T-cell (primary cell): ENCODE measurements at regions of chr5 and their contacts with region 1.

Region 1: GRCh38 chr5:55037046-55037771 is 13.2 kb downstream of the GZMK start:
- DNase-seq: peak; percentile 21 to 76 (median 54)
- ATAC-seq: peak; percentile 92 to 99 (median 96)
- H3K4me3 ChIP-seq: no peak overlapping the region
- H3K4me3 Mint-ChIP-seq: peak overlapping the region in 1 of 3 donors; percentile 52
- H3K27ac ChIP-seq: peak overlapping the region; percentile 80
- H3K27ac Mint-ChIP-seq: peak overlapping the region; percentile 91 to 96
- H3K4me1 ChIP-seq: peaks cover 16 to 26% of the 10 kb centered on the region in 2 experiments
- H3K4me1 Mint-ChIP-seq: peaks cover 25 to 37% (median 36%) of the 10 kb centered on the region in 3 donors
- H3K27me3 ChIP-seq: no peaks in the 10 kb centered on the region
- H3K27me3 Mint-ChIP-seq: no peaks in the 10 kb centered on the region

Region 2: GRCh38 chr5:55021410-55021809 is 15.8 kb before region 1 on chr5:
- CTCF ChIA-PET with region 1: interaction called, 3 to 14 read pairs
- POLR2A ChIA-PET with region 1: interaction called, 3 to 4 read pairs
- DNase-seq: peak in 1 of 35 experiments; percentile 39
- ATAC-seq: no peak
- H3K4me3 ChIP-seq: no peak overlapping the region
- H3K4me3 Mint-ChIP-seq: no peak overlapping the region
- H3K27ac ChIP-seq: peak overlapping the region; percentile 69
- H3K27ac Mint-ChIP-seq: peak overlapping the region; percentile 50 to 58
- H3K4me1 ChIP-seq: peaks cover 15 to 32% of the 10 kb centered on the region in 2 experiments
- H3K4me1 Mint-ChIP-seq: peaks cover 46 to 54% (median 53%) of the 10 kb centered on the region in 3 donors
- H3K27me3 ChIP-seq: no peaks in the 10 kb centered on the region
- H3K27me3 Mint-ChIP-seq: no peaks in the 10 kb centered on the region

Region 3: DNA sequence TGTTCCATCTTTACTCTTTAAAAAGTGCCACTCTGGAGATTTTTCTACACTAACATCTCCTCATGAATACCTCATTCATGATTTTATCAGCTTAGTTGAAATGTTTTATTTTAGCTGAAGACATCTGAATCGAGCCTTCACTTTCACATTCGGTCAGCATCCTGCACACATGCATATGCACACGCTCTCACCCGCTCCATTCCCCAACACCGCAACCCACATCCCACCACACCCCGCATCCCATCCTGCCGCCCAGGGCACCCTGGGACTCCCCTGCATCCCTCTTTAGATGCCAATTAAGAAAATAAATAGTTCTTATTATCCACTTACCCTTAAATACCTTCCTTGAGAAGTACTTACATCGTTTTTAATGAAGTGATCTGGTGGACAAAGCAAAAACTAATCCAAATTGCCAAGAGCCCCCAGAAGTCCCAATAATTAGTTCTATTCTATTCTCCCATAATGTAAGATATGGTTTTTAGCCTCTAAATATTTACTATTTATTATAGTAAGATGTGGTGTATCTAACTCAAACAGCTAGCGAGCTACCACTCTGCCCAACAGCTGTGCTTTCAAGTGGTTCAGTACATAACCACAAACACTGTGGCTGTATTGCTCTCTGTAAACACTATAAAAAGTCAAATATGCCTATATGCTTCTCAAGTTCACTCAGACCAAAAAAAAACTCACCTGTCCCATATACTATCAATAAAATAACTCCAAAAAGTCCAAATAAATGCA is 25.0 kb after region 1 on chr5:
- CTCF ChIA-PET with region 1: interaction called in 1 of 2 experiments, 11 read pairs
- POLR2A ChIA-PET with region 1: no interaction called
- DNase-seq: peak in 34 of 35 experiments; percentile 5 to 64 (median 34)
- ATAC-seq: peak; percentile 79 to 88 (median 85)
- H3K4me3 ChIP-seq: peak overlapping the region; percentile 40 to 47
- H3K4me3 Mint-ChIP-seq: peak overlapping the region; percentile 72 to 76 (median 75)
- H3K27ac ChIP-seq: peak overlapping the region; percentile 67
- H3K27ac Mint-ChIP-seq: peak overlapping the region; percentile 79 to 91
- H3K4me1 ChIP-seq: peaks cover 24 to 26% of the 10 kb centered on the region in 2 experiments
- H3K4me1 Mint-ChIP-seq: peaks cover 57 to 61% (median 57%) of the 10 kb centered on the region in 3 donors
- H3K27me3 ChIP-seq: no peaks in the 10 kb centered on the region
- H3K27me3 Mint-ChIP-seq: no peaks in the 10 kb centered on the region